ENCODE measurements at regions of chr1 and their contacts with region 1.

Region 1: DNA sequence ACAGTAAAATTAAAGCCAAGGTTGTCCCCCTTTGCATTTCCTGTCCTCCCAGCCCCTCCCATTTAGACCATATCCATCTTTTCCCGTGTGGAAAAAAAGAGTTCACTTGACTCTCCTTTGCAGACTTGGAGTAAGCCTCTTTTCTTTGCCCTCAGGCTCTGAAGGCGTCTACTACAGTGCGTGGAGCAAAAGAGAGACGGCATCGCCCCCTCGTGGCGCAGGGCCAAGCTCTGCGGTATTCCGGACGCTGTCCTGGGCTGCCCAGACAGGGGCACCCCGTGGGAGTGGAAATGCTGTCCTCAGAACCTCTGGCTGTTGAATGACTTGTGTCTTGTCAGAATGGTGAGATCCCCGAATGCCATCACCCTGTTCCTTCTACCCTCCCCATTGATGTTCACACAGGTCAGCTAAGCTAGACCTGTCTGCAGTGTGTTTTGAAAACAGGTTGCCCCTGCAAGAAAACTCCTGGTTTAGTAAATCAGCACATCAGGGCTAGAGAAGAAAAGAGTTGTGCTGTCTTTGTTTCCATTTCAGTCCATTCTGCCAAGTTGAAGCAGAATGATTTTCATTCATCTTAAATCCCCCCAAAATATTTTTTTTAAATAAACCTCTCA is 12.3 kb upstream of the GJA8 start:
- DNase-seq: peak; percentile 64
- H3K27ac ChIP-seq: no peak overlapping the region
- CTCF ChIP-seq: peak; percentile 50

Region 2: DNA sequence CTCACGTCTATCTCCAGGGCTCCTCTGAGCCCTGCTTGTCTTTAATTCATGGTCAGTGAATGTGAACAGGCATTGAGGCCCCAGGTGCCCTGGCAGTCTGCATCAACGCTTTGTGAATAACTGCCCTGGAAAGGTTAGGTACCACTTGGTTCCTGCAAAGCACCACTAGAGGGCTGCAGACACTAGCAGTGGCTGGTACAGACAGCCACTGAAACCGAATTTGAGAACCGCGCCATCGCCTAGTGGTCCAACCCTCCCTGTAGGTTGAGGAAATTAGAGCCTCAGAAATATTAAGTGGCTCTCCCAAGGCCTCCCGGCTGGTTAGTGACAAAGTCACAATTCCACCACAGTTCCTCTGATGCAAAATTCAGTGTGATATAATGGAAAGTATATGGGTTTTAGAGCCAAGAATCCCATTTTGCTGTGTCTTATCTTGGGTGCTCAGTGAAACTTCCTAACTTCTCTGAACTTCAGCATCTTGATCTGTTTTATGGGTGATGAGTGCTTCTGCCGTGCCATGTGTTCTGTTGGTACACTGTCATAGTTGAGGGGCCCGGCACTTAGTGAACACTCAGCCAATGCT is 395.2 kb before region 1 on chr1:
- CTCF ChIA-PET with region 1: interaction called, 17 read pairs
- POLR2A ChIA-PET with region 1: no interaction called
- DNase-seq: peak; percentile 74
- H3K27ac ChIP-seq: no peak overlapping the region
- CTCF ChIP-seq: peak; percentile 87

Region 3: DNA sequence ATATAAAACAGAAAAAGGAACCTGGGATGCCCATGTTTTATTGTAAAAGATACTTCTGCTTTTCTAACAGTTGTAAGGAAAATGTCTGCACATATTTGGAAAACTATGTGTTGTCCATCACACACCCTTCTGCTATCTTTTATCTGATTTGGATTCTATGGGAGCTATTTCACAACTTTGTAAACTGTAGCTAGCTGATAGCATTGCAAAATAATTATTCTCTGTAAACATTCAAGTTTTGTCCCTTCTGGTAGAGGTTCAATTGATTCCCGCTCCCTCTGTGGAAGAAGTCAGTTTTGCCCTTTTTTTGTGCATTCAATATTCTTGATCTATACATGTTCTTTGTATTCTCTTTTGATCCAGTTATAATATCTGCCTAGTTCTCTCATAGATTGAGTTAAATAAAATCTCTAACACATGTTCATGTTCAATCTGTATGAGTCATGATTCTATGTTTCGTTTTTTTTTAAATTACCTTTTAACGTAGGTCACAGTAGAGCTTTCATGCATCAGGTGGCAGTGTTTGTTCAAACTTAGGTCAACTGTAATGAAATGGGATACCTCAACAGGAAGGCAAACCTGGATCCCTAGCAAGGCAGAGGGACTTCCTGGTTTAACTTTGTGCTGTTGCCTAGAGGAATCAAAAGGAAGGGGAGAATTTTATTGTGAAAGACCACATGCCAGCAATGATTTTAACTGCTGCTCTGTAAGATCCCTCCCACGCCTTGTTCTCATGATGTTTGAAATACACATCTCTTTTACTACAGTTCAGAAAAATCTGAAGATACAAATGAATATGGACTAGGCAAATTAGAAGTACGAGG is 375.0 kb before region 1 on chr1:
- CTCF ChIA-PET with region 1: interaction called, 13 read pairs
- POLR2A ChIA-PET with region 1: no interaction called
- DNase-seq: peak; percentile 73
- H3K27ac ChIP-seq: no peak overlapping the region
- CTCF ChIP-seq: 0 out of 2 replicates have a peak, but pooled peaks have one; percentile 11

Region 4: GRCh38 chr1:147635342-147635741 is 254.9 kb before region 1 on chr1:
- CTCF ChIA-PET with region 1: interaction called, 13 read pairs
- POLR2A ChIA-PET with region 1: no interaction called
- DNase-seq: no peak
- H3K27ac ChIP-seq: no peak overlapping the region
- CTCF ChIP-seq: no peak

Region 5: DNA sequence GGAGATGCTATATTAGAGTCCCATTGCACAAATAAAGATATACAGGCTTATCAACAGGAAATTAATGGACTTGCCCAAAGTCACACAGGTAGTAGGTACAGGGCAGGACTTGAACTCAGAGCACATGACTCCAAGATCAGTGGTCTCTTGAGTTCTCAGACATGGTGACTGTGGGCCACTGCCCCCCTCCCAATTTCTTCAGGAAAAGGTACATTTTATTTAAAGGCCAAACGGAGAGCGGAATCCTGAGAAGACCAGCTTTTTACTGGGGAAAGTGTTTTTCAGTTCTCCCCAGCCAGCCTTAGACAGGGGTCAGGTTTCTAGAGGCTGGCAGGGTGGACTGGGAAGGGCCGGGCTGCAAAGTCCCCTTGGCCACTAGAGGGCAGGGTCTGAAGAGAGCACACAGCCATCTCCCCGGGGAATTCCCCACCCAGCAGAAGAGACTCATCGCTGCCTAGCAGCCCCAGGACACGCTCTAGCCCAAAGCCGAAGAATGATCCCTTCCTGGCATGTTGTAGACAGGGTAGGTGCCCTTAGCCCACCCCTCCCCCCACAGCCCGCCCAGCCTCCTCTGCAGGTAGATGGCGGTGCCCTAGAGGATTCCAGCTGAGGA is 249.6 kb before region 1 on chr1:
- CTCF ChIA-PET with region 1: interaction called, 11 read pairs
- POLR2A ChIA-PET with region 1: no interaction called
- DNase-seq: peak; percentile 83
- H3K27ac ChIP-seq: no peak overlapping the region
- CTCF ChIP-seq: peak; percentile 80

Region 6: GRCh38 chr1:147723691-147724323 is 166.5 kb before region 1 on chr1:
- CTCF ChIA-PET with region 1: interaction called, 19 read pairs
- POLR2A ChIA-PET with region 1: no interaction called
- DNase-seq: peak; percentile 42
- H3K27ac ChIP-seq: no peak overlapping the region
- CTCF ChIP-seq: no peak